ENCODE measurements at regions of chr20 and their contacts with region 1.

Region 1: GRCh38 chr20:20824924-20825584 is 112.6 kb upstream of the RALGAPA2 start:
- DNase-seq: peak; percentile 58
- H3K4me3 ChIP-seq: no peak overlapping the region
- H3K27ac ChIP-seq: no peak overlapping the region
- H3K4me1 ChIP-seq: peaks cover 0 to 4% (median 0%) of the 10 kb centered on the region in 4 donors
- H3K27me3 ChIP-seq: peaks cover 7% of the 10 kb centered on the region
- CTCF ChIP-seq: peak; percentile 75 to 77 (median 76)
- EP300 ChIP-seq: no peak
- POLR2A ChIP-seq: no peak

Region 2: GRCh38 chr20:20076297-20077065 is 748.6 kb before region 1 on chr20:
- in situ Hi-C with region 1: loop called in 1 of 4 experiments (anchors 25 kb)
- intact Hi-C with region 1: loop called (anchors 10 kb)
- DNase-seq: no peak
- H3K4me3 ChIP-seq: no peak overlapping the region
- H3K27ac ChIP-seq: no peak overlapping the region
- H3K4me1 ChIP-seq: peaks cover 0 to 6% (median 0%) of the 10 kb centered on the region in 4 donors
- H3K27me3 ChIP-seq: peaks cover 13% of the 10 kb centered on the region
- CTCF ChIP-seq: no peak
- EP300 ChIP-seq: no peak
- POLR2A ChIP-seq: no peak

Region 3: GRCh38 chr20:20658871-20659431 is 166.1 kb before region 1 on chr20:
- in situ Hi-C with region 1: loop called (anchors 10 kb)
- intact Hi-C with region 1: no loop called
- DNase-seq: no peak
- H3K4me3 ChIP-seq: no peak overlapping the region
- H3K27ac ChIP-seq: no peak overlapping the region
- H3K4me1 ChIP-seq: no peaks in the 10 kb centered on the region
- H3K27me3 ChIP-seq: no peaks in the 10 kb centered on the region
- CTCF ChIP-seq: no peak
- EP300 ChIP-seq: no peak
- POLR2A ChIP-seq: no peak

Region 4: GRCh38 chr20:20664795-20665589 is 160.1 kb before region 1 on chr20:
- in situ Hi-C with region 1: loop called in 1 of 4 experiments (anchors 10 kb)
- intact Hi-C with region 1: no loop called
- DNase-seq: no peak
- H3K4me3 ChIP-seq: no peak overlapping the region
- H3K27ac ChIP-seq: no peak overlapping the region
- H3K4me1 ChIP-seq: peaks cover 0 to 16% (median 0%) of the 10 kb centered on the region in 4 donors
- H3K27me3 ChIP-seq: no peaks in the 10 kb centered on the region
- CTCF ChIP-seq: peak; percentile 30 to 48 (median 42)
- EP300 ChIP-seq: no peak
- POLR2A ChIP-seq: no peak

Measured in transverse colon (tissue), 4 donors.